ENCODE measurements at regions of chr10 and their contacts with region 1.

Region 1: DNA sequence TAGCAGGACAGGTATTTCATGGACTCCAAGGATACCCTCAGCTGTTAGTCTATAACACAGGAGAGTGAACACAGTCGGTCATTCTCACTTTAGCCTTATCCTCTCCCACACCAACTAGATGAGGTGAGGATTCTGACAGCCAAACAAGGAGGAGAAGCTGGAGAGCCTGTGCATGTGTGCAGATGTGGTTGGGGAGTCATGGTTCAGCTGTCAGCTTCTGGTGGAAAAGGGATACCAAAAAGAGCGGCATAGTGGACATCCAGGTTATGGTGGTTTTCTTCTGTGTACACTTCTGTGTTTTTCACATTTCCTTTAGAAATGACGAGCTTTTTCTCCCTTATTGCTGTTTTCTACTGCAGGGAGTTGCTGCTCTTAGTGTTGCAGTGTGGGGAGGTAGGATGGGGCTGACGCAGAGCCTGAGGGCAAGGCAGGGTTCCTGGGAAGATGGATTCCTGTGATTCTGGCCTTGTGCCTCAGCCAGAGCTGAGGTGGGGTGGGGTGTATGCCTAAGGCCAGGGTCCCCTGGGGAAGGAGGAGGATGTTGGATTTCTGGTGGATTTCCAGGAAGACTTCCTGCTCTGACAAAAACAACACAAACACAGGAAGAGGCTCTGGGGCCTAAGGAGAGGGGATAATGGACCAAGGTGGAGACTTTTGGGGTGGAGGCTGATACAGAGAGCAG is 26.5 kb downstream of the PLAU start:
- DNase-seq: no peak
- H3K4me3 ChIP-seq: no peak overlapping the region
- H3K27ac ChIP-seq: peak overlapping the region; percentile 63
- H3K4me1 ChIP-seq: peaks cover 33% of the 10 kb centered on the region
- H3K27me3 ChIP-seq: no peaks in the 10 kb centered on the region
- CTCF ChIP-seq: no peak
- POLR2A ChIP-seq: no peak

Region 2: GRCh38 chr10:73886085-73886529 is 51.4 kb before region 1 on chr10:
- intact Hi-C with region 1: loop called (anchors 5 kb)
- DNase-seq: no peak
- H3K4me3 ChIP-seq: no peak overlapping the region
- H3K27ac ChIP-seq: peak overlapping the region; percentile 85
- H3K4me1 ChIP-seq: peaks cover 34% of the 10 kb centered on the region
- H3K27me3 ChIP-seq: no peaks in the 10 kb centered on the region
- CTCF ChIP-seq: peak; percentile 78 to 96 (median 90)
- POLR2A ChIP-seq: no peak

Region 3: GRCh38 chr10:74058658-74059057 is 121.2 kb after region 1 on chr10:
- intact Hi-C with region 1: no loop called
- DNase-seq: no peak
- H3K4me3 ChIP-seq: no peak overlapping the region
- H3K27ac ChIP-seq: no peak overlapping the region
- H3K4me1 ChIP-seq: peaks cover 63% of the 10 kb centered on the region
- H3K27me3 ChIP-seq: no peaks in the 10 kb centered on the region
- CTCF ChIP-seq: no peak
- POLR2A ChIP-seq: no peak

Region 4: GRCh38 chr10:74165530-74165901 is 228.0 kb after region 1 on chr10:
- intact Hi-C with region 1: no loop called
- DNase-seq: no peak
- H3K4me3 ChIP-seq: no peak overlapping the region
- H3K27ac ChIP-seq: no peak overlapping the region
- H3K4me1 ChIP-seq: peaks cover 14% of the 10 kb centered on the region
- H3K27me3 ChIP-seq: no peaks in the 10 kb centered on the region
- CTCF ChIP-seq: no peak
- POLR2A ChIP-seq: no peak